OCI-LY7 (cell line): ENCODE measurements at regions of chr18 and their contacts with region 1.

Region 1: GRCh38 chr18:23452728-23453679 is at the start of gene RIOK3:
- DNase-seq: peak; percentile 96
- H3K4me3 ChIP-seq: peak within 1 kb of the TSS; percentile 87
- H3K27ac ChIP-seq: peak within 1 kb of the TSS; percentile 22
- H3K4me1 ChIP-seq: peaks cover 17% of the 10 kb centered on the region
- CTCF ChIP-seq: no peak
- total RNA-seq, gene RIOK3: 18.1 and 26.6 TPM in 2 replicates

Region 2: DNA sequence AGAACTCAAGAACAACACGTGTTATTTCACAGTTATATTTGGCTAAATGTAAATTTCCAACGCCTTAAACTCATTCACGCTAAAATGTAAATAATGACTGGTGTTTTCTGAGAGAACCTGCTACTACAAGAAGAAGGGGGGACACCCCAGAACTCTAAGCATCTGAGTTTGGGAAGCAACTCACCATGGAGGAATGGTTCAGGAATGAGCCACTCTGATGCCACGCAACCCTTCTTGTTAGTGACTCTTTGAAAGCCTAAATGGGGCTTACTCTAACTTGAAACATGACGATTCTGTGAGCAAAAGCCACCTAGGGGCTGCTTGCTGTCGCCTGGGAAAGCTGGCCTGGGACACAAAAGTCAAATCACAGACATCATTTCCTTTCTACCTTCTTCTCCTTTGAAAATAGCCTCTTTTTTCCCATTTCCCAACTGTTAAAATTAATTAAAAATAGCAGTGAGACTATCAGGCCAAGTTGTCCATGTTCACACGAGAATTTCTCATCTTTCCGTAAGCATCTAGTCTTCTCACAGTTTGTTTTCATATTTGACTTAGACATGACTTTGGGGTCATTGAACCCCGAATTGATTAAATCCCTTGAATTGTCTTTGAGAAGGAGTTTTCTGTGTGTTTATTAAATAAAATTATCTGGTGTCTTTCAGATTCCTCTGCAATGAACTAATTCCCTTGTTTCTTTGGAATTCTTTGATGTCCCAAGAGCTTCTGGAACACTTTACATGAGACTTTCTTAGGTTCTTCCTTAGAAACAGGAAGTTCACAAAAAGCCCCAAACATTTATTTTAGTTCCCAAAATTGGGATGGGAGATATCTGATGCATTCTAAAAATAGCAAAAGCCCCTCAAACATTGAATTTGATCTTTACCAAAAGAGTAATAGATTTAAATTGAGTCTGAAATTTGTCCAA is 393.2 kb before region 1 on chr18:
- CTCF ChIA-PET with region 1: no interaction called
- POLR2A ChIA-PET with region 1: no interaction called
- intact Hi-C with region 1: no loop called
- DNase-seq: no peak
- H3K4me3 ChIP-seq: no peak overlapping the region
- H3K27ac ChIP-seq: no peak overlapping the region
- H3K4me1 ChIP-seq: no peaks in the 10 kb centered on the region
- CTCF ChIP-seq: no peak

Region 3: GRCh38 chr18:23422672-23423418 is 30.2 kb before region 1 on chr18:
- CTCF ChIA-PET with region 1: no interaction called
- POLR2A ChIA-PET with region 1: interaction called, 12 read pairs
- intact Hi-C with region 1: loop called (anchors 1 kb)
- DNase-seq: peak; percentile 87
- H3K4me3 ChIP-seq: peak overlapping the region; percentile 35
- H3K27ac ChIP-seq: peak overlapping the region; percentile 89
- H3K4me1 ChIP-seq: peaks cover 47% of the 10 kb centered on the region
- CTCF ChIP-seq: peak; percentile 50

Region 4: DNA sequence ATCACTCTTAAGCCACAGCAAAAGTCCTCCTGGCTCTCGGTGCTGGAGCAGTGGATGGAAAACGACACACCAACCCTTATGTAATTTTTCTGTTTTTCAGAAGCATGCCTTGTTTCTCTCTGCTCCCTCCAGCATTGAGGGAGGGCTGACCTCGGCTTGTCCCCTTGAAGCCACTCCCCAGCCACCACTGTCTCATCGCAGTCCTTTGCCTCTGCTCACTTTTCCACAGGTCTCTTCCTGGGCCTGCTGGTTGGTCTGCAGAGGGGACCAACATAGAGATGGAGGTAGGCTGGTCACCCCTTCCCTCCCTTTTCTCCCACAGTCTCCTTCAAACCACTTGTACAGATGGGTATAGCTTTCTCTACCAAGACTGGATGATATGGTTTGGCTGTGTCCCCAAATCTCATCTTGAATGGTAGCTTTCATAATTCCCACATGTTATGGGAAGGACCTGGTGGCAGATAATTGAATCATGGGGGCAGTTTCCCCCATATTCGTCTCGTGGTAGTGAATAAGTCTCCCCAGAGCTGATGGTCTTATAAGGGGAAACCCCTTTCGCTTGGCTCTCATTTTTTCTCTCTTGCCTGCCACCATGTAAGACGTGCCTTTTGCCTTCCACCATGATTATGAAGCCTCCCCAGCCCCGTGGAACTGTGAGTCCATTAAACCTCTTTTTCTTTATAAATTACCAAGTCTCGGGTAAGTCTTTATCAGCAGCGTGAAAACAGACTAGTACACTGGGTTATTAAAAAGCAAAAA is 14.2 kb before region 1 on chr18:
- CTCF ChIA-PET with region 1: no interaction called
- POLR2A ChIA-PET with region 1: interaction called, 13 read pairs
- intact Hi-C with region 1: no loop called
- DNase-seq: no peak
- H3K4me3 ChIP-seq: peak overlapping the region; percentile 95
- H3K27ac ChIP-seq: no peak overlapping the region
- H3K4me1 ChIP-seq: peaks cover 11% of the 10 kb centered on the region
- CTCF ChIP-seq: no peak

Region 5: GRCh38 chr18:23487738-23488570 is 35.0 kb after region 1 on chr18:
- CTCF ChIA-PET with region 1: no interaction called
- POLR2A ChIA-PET with region 1: interaction called, 10 read pairs
- intact Hi-C with region 1: no loop called
- DNase-seq: peak; percentile 33
- H3K4me3 ChIP-seq: peak overlapping the region; percentile 20
- H3K27ac ChIP-seq: peak overlapping the region; percentile 45
- H3K4me1 ChIP-seq: peaks cover 13% of the 10 kb centered on the region
- CTCF ChIP-seq: no peak

Region 6: DNA sequence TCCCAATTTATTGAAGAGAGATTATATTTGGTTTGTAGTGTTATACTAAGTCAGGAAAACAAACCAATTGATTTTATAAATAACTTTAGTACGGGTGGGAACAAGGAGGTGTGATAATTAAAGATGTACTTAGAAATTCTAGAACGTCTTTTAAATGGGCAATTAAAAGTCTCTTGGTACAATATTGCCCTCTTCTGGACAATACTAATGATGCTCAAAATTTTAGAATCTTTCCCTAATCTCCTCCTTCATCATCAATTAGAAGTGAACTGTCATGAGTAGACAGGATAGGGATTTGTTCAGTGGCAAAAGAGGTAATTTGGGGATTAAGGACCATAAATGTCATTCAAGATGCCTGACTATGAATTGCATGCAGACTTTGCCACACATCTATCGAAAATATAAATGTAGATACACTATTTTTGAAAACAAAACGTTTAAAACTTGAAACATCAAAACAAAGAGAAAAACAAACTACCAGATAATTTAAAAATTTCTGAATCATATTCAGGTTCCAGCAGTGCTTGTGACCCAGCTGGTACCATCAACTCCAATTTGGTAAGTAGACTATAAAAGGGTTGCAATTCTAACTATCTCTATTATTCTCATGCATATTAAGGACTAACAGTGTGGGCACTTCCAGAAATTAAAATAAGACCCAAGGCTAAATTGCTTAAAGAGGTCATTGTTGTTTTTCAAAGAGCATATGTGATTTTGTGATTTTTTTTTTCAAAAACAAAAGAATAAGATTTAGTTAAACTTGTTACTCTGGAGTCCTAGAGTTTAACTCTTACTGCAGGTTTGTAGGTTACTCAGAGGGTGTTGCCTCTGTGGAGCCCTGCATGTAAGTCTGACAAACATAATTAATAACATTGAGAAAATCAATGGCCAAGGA is 359.8 kb after region 1 on chr18:
- CTCF ChIA-PET with region 1: no interaction called
- POLR2A ChIA-PET with region 1: no interaction called
- intact Hi-C with region 1: no loop called
- DNase-seq: peak; percentile 46
- H3K4me3 ChIP-seq: no peak overlapping the region
- H3K27ac ChIP-seq: no peak overlapping the region
- H3K4me1 ChIP-seq: peaks cover 14% of the 10 kb centered on the region
- CTCF ChIP-seq: peak; percentile 85